ENCODE measurements at regions of chr12 and their contacts with region 1.

Region 1: GRCh38 chr12:124053851-124054250 is 80.8 kb downstream of the ZNF664 start:
- DNase-seq: peak; percentile 92
- H3K4me3 ChIP-seq: no peak overlapping the region
- H3K27ac ChIP-seq: peak overlapping the region; percentile 46
- H3K4me1 ChIP-seq: peaks cover 8% of the 10 kb centered on the region
- H3K27me3 ChIP-seq: no peaks in the 10 kb centered on the region
- CTCF ChIP-seq: peak; percentile 82 to 92
- POLR2A ChIP-seq: no peak

Region 2: GRCh38 chr12:123979566-123979965 is 74.3 kb before region 1 on chr12:
- CTCF ChIA-PET with region 1: no interaction called
- POLR2A ChIA-PET with region 1: no interaction called
- dilution Hi-C with region 1: no loop called
- intact Hi-C with region 1: no loop called
- DNase-seq: no peak
- H3K4me3 ChIP-seq: no peak overlapping the region
- H3K27ac ChIP-seq: no peak overlapping the region
- H3K4me1 ChIP-seq: no peaks in the 10 kb centered on the region
- H3K27me3 ChIP-seq: no peaks in the 10 kb centered on the region
- CTCF ChIP-seq: no peak
- POLR2A ChIP-seq: no peak

Region 3: GRCh38 chr12:124007826-124008570 is 45.9 kb before region 1 on chr12:
- CTCF ChIA-PET with region 1: no interaction called
- POLR2A ChIA-PET with region 1: no interaction called
- dilution Hi-C with region 1: no loop called
- intact Hi-C with region 1: no loop called
- DNase-seq: no peak
- H3K4me3 ChIP-seq: no peak overlapping the region
- H3K27ac ChIP-seq: no peak overlapping the region
- H3K4me1 ChIP-seq: no peaks in the 10 kb centered on the region
- H3K27me3 ChIP-seq: no peaks in the 10 kb centered on the region
- CTCF ChIP-seq: no peak
- POLR2A ChIP-seq: no peak

Region 4: DNA sequence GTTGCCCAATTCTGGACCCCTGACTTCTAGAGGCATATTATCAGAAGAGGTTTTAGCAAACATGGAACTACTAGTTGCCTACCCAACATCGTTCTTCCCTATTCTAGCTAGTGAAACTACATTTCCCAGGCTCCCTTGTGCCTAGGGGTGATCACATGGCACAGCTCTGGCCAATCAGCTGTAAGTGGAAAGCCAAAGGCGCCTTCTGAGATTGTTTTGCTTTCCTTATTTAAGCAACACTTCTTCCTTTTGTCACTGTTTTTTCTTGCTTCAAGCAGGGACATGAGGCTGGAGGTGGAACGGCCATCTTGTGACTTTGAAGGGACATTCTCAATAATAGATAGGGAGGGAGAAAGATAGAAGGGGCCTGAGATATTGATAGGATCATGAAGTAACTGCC is 55.9 kb after region 1 on chr12:
- CTCF ChIA-PET with region 1: interaction called, 6 read pairs
- POLR2A ChIA-PET with region 1: no interaction called
- dilution Hi-C with region 1: no loop called
- intact Hi-C with region 1: loop called (anchors 2 kb)
- DNase-seq: peak; percentile 85
- H3K4me3 ChIP-seq: no peak overlapping the region
- H3K27ac ChIP-seq: peak overlapping the region; percentile 91
- H3K4me1 ChIP-seq: peaks cover 20% of the 10 kb centered on the region
- H3K27me3 ChIP-seq: no peaks in the 10 kb centered on the region
- CTCF ChIP-seq: no peak
- POLR2A ChIP-seq: no peak

Region 5: GRCh38 chr12:124294780-124295241 is 241.0 kb after region 1 on chr12 and contains the start of gene RFLNA:
- CTCF ChIA-PET with region 1: interaction called, 28 read pairs
- POLR2A ChIA-PET with region 1: no interaction called
- dilution Hi-C with region 1: no loop called
- intact Hi-C with region 1: loop called (anchors 5 kb)
- DNase-seq: peak; percentile 42
- H3K4me3 ChIP-seq: peak within 1 kb of the TSS; percentile 58 to 76 (median 62)
- H3K27ac ChIP-seq: peak within 1 kb of the TSS; percentile 57
- H3K4me1 ChIP-seq: peaks cover 21% of the 10 kb centered on the region
- H3K27me3 ChIP-seq: no peaks in the 10 kb centered on the region
- CTCF ChIP-seq: no peak
- POLR2A ChIP-seq: peak; percentile 85
- total RNA-seq, gene RFLNA: 3.4 and 19.7 TPM in 2 replicates

Region 6: DNA sequence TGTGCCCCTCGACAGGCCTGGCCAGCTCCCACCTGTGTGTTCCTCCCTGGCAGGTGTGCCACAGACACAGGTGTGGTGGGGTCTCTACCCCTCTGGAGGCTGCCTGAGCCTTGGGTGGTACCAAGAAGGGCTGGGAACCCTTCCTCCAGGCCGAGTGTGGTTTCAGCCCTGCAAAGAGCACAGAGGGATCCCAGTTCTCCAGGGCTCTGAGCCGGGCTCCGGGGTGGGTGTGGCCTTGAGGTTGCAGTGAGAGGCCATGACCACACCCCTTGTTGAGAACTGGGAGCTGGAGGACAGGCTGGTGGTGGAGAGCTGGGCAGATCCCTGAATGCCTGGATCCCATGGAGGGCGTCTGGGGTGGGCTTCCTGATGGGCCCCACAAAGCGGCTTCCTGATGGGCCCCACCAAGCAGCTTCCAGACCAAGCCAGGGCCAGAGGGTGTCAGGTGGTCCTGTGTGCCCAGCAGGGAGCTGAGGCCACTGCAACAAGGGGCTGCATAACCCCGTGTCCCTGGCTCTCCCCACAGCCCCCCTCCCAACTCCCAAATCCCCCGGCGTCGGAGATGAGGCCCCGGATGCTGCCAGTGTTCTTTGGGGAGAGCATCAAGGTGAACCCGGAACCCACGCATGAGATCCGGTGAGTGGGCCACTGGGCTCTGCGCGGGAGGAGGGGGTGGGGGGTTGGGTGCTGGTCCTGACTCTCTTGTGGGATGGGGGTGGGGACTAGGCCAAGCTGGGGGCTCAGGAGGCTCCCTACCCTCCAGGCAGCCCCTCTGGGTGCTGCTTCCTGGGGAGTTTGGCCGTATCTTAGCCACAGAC is 257.6 kb after region 1 on chr12:
- CTCF ChIA-PET with region 1: interaction called, 169 read pairs
- POLR2A ChIA-PET with region 1: no interaction called
- dilution Hi-C with region 1: no loop called
- intact Hi-C with region 1: no loop called
- DNase-seq: no peak
- H3K4me3 ChIP-seq: no peak overlapping the region
- H3K27ac ChIP-seq: no peak overlapping the region
- H3K4me1 ChIP-seq: no peaks in the 10 kb centered on the region
- H3K27me3 ChIP-seq: no peaks in the 10 kb centered on the region
- CTCF ChIP-seq: no peak
- POLR2A ChIP-seq: no peak

Region 7: DNA sequence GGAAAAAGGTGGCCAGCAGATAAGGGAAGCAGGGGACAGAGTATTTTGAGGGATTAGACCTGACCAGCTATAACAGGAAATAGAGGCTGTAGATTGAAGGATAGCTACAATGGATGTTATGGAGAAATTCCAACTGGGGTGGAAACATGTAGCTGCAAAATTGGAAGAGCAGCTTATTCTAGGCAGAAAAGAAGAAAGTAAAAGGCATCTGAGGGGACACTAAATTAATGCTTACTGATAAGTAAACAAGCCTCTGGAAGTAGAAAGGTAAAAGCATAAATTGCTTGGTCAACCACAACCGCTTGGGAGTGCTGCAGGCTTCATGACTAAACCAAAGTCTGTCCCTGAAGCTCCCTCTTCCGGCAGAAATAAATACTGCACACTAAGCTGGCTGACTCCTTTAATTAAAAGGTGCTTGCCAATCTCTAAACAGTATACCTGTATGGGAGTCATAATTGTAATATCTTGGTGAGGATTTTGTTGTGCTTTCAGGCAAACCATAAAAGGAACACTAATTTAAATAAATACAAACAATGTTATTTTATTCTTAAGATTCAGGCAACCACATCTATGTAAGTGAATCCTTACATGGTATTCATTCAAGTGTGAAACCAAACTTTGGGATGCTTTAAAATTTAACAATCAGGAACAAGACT is 852.9 kb after region 1 on chr12:
- CTCF ChIA-PET with region 1: interaction called, 13 read pairs
- POLR2A ChIA-PET with region 1: no interaction called
- dilution Hi-C with region 1: no loop called
- intact Hi-C with region 1: no loop called
- DNase-seq: peak; percentile 95
- H3K4me3 ChIP-seq: no peak overlapping the region
- H3K27ac ChIP-seq: no peak overlapping the region
- H3K4me1 ChIP-seq: peaks cover 22% of the 10 kb centered on the region
- H3K27me3 ChIP-seq: no peaks in the 10 kb centered on the region
- CTCF ChIP-seq: peak; percentile 90 to 97
- POLR2A ChIP-seq: peak; percentile 22

Measured in endothelial cell of umbilical vein (primary cell).